Adrenal gland (tissue), 19 donors: ENCODE measurements at regions of chr6 and their contacts with region 1.

Region 1: GRCh38 chr6:109705258-109705657 is 14.2 kb downstream of the FIG4 start:
- DNase-seq: peak; percentile 77 to 95 (median 86)
- H3K4me3 ChIP-seq: no peak overlapping the region
- H3K27ac ChIP-seq: no peak overlapping the region
- H3K4me1 ChIP-seq: peaks cover 0 to 3% of the 10 kb centered on the region in 2 donors
- H3K27me3 ChIP-seq: no peaks in the 10 kb centered on the region
- CTCF ChIP-seq: peak; percentile 97 to 100 (median 100)
- POLR2A ChIP-seq: no peak

Region 2: DNA sequence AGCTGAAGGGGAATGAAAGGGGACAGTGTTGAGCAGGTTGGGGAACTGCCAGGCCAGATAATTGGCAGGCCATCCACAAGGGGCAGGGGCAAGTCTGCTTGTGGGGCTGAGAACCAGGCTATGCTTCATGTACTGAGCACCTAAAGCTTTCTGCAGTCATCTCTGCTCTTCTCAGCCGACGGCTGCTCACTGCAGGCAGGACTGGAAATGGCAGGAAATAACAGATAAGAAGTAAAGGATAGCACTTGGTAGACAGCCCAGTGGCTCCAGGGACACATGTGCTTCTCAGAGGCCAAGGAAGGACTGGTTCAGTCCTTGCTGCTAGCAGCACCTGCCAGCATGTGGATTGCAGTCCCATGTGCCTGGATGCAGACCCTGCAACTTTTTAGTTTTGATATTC is 412.8 kb before region 1 on chr6:
- intact Hi-C with region 1: no loop called
- DNase-seq: peak in 2 of 7 donors; percentile 20 to 33
- H3K4me3 ChIP-seq: no peak overlapping the region
- H3K27ac ChIP-seq: no peak overlapping the region
- H3K4me1 ChIP-seq: no peaks in the 10 kb centered on the region
- H3K27me3 ChIP-seq: peaks cover 4% of the 10 kb centered on the region
- CTCF ChIP-seq: no peak
- POLR2A ChIP-seq: no peak

Region 3: GRCh38 chr6:109526905-109527628 is 178.2 kb before region 1 on chr6:
- intact Hi-C with region 1: loop called in 1 of 2 experiments (anchors 5 kb)
- DNase-seq: peak; percentile 28 to 64 (median 55)
- H3K4me3 ChIP-seq: no peak overlapping the region
- H3K27ac ChIP-seq: no peak overlapping the region
- H3K4me1 ChIP-seq: no peaks in the 10 kb centered on the region
- H3K27me3 ChIP-seq: no peaks in the 10 kb centered on the region
- CTCF ChIP-seq: peak; percentile 30 to 68 (median 55)
- POLR2A ChIP-seq: no peak

Region 4: GRCh38 chr6:109644131-109644530 is 61.1 kb before region 1 on chr6:
- intact Hi-C with region 1: no loop called
- DNase-seq: no peak
- H3K4me3 ChIP-seq: no peak overlapping the region
- H3K27ac ChIP-seq: no peak overlapping the region
- H3K4me1 ChIP-seq: no peaks in the 10 kb centered on the region
- H3K27me3 ChIP-seq: no peaks in the 10 kb centered on the region
- CTCF ChIP-seq: no peak
- POLR2A ChIP-seq: no peak

Region 5: DNA sequence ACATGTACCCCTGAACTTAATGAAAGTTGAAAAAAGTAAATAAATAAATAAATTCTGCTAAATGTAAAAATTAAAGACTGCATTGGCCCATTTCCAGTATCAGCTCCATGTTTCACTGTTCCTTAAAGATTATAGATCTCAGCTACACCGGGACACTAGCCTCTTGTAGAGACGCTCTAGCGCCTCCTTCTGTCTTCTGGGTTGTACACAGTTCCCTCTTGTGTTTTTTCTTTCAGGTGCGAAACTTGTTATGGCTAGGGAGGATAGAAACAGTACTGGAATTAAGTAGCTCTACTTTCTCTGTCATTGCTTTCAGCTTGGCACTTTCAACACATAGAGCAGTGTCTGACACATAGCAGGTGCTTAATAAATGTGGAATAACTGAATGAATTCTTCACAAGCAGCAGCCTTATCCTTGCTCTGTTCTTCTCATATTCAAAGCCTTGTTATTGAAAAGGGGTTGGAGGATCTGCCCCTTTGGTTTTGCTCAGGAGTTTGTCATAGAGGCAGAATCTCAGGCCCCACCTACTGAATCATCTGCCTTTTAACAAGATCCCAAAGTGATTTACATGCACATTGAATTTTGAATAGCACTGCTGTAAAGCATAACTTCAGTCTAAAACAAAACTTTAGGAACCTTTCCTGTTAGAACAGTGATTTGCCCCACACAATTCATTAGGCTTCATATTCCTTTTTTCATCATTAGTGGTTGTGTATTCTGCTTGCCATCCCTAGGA is 78.2 kb after region 1 on chr6:
- intact Hi-C with region 1: loop called in 1 of 2 experiments (anchors 10 kb)
- DNase-seq: peak in 2 of 7 donors; percentile 34 to 54
- H3K4me3 ChIP-seq: no peak overlapping the region
- H3K27ac ChIP-seq: no peak overlapping the region
- H3K4me1 ChIP-seq: no peaks in the 10 kb centered on the region
- H3K27me3 ChIP-seq: no peaks in the 10 kb centered on the region
- CTCF ChIP-seq: peak in 4 of 6 experiments; percentile 6 to 37 (median 22)
- POLR2A ChIP-seq: no peak

Region 6: GRCh38 chr6:110039364-110039980 is 334.2 kb after region 1 on chr6:
- intact Hi-C with region 1: loop called (anchors 5 kb)
- DNase-seq: peak; percentile 82 to 96 (median 88)
- H3K4me3 ChIP-seq: peak overlapping the region in 2 of 4 donors; percentile 5 to 30
- H3K27ac ChIP-seq: no peak overlapping the region
- H3K4me1 ChIP-seq: no peaks in the 10 kb centered on the region
- H3K27me3 ChIP-seq: no peaks in the 10 kb centered on the region
- CTCF ChIP-seq: peak; percentile 87 to 96 (median 90)
- POLR2A ChIP-seq: no peak

Region 7: DNA sequence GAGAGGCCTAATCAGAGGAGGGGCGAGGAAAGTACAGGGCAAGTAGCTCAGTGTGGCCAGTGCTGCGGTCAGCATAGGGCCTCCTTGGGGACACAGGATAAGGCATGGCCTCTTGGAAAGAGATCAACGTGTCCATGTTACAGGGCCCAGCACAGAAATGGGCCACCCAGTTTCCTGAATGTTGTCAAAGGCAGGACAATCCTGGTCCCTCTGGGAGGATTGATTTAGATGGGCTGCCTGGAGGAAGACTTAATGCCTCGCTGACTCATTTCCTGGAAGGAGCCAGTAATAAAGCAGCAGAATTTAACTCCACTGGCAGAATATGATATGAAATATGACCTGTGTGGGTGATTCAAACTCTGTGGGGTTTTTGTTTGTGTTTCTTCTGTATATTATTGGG is 693.5 kb after region 1 on chr6:
- intact Hi-C with region 1: loop called in 1 of 2 experiments (anchors 10 kb)
- DNase-seq: no peak
- H3K4me3 ChIP-seq: no peak overlapping the region
- H3K27ac ChIP-seq: peak overlapping the region in 1 of 5 donors; percentile 3
- H3K4me1 ChIP-seq: peaks cover 0 to 4% of the 10 kb centered on the region in 2 donors
- H3K27me3 ChIP-seq: no peaks in the 10 kb centered on the region
- CTCF ChIP-seq: no peak
- POLR2A ChIP-seq: no peak